RWPE1 (cell line): ENCODE measurements at regions of chr11 and their contacts with region 1.

Region 1: GRCh38 chr11:1652771-1653540 is 23.4 kb downstream of the KRTAP5-5 start:
- DNase-seq: peak; percentile 77
- H3K27ac ChIP-seq: no peak overlapping the region
- CTCF ChIP-seq: peak; percentile 91

Region 2: DNA sequence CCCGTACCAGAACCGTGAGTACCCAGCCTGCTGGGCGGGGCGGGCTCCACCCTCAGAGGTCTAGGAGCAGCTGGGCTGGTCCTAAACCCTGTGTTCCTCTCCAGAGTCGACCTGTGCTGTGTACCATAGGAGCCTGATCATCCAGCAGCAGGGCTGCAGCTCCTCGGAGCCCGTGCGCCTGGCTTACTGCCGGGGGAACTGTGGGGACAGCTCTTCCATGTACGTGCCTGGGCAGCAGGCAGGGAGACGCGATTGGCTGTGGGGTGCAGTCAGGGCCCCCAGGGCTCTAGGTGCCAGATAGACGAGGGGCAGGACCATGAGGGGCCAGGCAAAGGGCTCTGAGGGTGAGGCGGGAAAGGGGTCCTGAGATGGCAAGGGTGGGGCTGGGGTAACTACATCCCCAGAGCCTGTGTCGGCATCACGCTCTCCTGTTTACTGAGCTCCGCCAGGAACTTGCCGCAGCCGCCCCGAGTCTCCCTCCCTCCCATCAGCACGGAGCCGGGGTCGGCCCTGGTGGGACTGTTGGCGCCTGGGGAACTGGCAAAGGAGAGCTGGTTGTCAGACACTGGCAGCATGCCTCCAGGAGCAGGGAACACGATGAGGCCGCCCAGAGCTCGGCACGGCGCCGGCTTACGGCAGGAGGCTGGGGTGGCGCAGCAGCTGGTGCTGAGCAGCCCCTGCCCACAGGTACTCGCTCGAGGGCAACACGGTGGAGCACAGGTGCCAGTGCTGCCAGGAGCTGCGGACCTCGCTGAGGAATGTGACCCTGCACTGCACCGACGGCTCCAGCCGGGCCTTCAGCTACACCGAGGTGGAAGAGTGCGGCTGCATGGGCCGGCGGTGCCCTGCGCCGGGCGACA is 453.0 kb before region 1 on chr11:
- CTCF ChIA-PET with region 1: no interaction called
- POLR2A ChIA-PET with region 1: no interaction called
- DNase-seq: no peak
- H3K27ac ChIP-seq: no peak overlapping the region
- CTCF ChIP-seq: no peak

Region 3: GRCh38 chr11:1640076-1640946 is 12.6 kb before region 1 on chr11:
- CTCF ChIA-PET with region 1: interaction called, 24 read pairs
- POLR2A ChIA-PET with region 1: no interaction called
- DNase-seq: peak; percentile 38
- H3K27ac ChIP-seq: no peak overlapping the region
- CTCF ChIP-seq: peak; percentile 71

Region 4: DNA sequence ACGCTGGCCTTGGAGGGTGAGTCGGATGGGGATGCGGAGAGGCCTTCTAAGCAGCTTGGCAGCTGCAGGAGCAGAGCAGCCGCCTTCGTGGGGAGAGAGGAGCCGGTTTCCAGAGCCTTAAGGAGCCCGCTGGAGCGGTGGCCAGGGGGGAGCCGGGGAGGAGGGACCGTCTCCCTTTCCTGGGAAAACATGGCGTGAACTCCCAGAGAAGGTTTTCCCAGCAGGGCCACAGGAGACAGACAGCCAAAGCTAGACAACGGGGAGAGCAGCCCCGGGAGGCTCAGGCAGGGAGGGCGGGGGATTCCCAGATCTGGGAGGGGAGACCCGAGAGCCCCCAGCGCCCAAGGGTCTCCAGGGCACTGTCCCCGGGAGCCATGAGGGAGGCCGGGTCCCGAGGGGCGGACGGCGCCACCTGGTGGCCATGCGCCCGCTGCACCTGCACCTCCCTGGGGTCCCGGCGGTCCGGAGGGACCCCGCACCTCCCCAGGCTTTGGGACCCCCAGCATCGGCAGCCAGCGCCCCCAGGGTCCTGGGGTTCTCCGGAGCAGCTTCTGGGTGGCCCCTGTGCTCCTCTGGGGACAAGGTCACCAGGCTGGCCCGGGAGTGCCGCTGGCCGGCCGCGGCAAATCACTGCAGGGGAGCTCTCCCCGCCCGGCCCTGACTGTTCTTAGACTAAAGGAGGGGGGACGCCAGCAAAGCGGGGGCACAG is 179.4 kb after region 1 on chr11:
- CTCF ChIA-PET with region 1: interaction called, 10 read pairs
- POLR2A ChIA-PET with region 1: no interaction called
- DNase-seq: no peak
- H3K27ac ChIP-seq: peak overlapping the region; percentile 97
- CTCF ChIP-seq: peak; percentile 92

Region 5: DNA sequence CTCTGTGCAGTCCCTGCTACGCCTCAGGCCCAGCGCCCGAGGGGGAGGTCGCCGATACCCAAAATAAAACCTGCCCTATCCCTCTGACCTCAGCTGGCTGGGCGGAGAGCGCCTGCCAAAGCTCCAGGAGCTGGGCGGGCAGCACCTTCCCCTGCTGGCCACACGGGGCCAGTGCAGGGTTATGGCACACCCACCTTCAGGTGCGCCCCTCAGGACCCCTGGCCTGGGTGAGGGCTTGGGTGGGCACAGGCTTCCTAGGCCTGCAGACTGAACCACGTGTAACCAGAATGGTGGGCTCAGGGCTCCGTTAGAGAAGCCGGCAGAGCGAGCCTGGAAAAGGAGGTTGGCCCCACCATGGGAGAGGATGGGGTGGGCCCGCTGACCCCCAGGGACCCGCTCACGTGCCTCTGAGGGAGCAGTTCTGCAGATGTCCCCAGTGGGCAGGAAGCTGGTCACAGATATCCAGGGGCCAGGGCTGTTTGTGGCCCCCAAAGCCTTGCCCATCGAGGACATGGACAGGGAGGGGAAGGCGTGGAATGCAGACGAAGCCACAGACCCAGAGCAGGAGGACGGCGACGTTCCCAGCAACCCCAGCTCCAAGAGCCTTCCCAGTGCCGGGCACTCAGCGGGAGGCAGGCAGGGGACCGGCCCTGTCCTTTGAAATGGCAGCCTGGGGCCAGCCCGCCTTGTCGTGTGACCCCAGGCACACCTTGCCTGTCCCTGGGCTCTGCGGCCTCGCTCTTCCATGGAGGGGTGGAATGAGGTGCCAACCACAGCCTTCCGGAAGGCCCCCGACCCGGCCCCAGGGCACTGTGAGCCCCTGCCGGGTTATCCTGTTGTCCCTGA is 264.9 kb after region 1 on chr11:
- CTCF ChIA-PET with region 1: interaction called, 10 read pairs
- POLR2A ChIA-PET with region 1: no interaction called
- DNase-seq: no peak
- H3K27ac ChIP-seq: peak overlapping the region; percentile 76
- CTCF ChIP-seq: peak; percentile 33

Region 6: DNA sequence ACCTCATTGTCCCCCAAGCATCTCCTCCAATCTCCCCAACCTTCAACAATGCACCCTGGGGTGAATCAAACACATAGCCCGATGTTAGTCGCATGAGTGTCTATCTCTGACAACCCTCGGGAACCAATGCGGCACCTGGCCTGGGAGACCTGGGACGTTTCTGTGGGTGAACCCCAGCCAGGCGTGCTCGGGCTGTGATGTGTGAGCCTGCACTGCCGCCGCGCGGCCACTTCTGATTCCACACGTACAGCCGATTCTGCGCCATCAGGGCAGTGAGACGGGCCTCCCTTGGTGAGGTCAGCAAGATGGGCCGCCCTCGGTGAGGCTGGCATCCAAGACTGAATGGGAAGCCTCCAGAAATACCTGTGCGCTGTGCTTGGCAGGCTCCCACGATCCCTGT is 349.9 kb after region 1 on chr11:
- CTCF ChIA-PET with region 1: interaction called, 15 read pairs
- POLR2A ChIA-PET with region 1: no interaction called
- DNase-seq: no peak
- H3K27ac ChIP-seq: no peak overlapping the region
- CTCF ChIP-seq: no peak

Region 7: GRCh38 chr11:2036863-2037486 is 384.0 kb after region 1 on chr11:
- CTCF ChIA-PET with region 1: interaction called, 11 read pairs
- POLR2A ChIA-PET with region 1: no interaction called
- DNase-seq: no peak
- H3K27ac ChIP-seq: no peak overlapping the region
- CTCF ChIP-seq: no peak

Region 8: GRCh38 chr11:2157294-2158040 is 504.5 kb after region 1 on chr11:
- CTCF ChIA-PET with region 1: interaction called, 42 read pairs
- POLR2A ChIA-PET with region 1: no interaction called
- DNase-seq: no peak
- H3K27ac ChIP-seq: no peak overlapping the region
- CTCF ChIP-seq: no peak